ENCODE measurements at regions of chr4 and their contacts with region 1.

Region 1: GRCh38 chr4:25767877-25768725 is 94.7 kb downstream of the SEL1L3 start:
- DNase-seq: peak; percentile 33
- H3K4me3 ChIP-seq: no peak overlapping the region
- H3K27ac ChIP-seq: no peak overlapping the region
- H3K4me1 ChIP-seq: no peaks in the 10 kb centered on the region
- H3K27me3 ChIP-seq: no peaks in the 10 kb centered on the region
- CTCF ChIP-seq: peak; percentile 47

Region 2: DNA sequence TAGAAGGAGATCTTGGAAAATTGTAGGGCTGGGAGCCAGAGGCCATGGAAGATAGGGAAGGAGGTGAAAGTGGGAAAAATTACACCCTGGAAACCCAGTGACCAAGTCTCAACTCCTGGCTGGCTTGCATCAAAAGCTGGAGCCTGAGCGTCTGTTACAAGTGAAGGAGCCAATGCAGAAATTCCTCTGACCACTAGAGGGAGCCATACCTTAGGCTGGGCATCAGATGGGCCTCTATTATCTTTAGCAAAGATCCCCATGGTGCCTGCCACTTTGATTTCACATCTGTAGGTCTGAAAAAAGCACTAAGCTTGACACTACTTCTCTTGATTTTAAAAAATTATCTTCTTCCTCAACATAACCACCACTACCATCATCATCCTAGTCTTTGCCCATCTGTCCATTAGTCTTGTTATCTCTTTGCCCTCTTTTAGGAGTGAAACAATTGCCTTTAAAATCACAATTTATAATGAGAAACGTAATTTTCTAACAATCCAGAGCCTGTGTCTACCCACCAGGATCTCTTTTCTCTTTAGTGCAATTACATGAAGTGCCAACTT is 328.1 kb before region 1 on chr4:
- intact Hi-C with region 1: loop called (anchors 5 kb)
- DNase-seq: peak; percentile 74
- H3K4me3 ChIP-seq: no peak overlapping the region
- H3K27ac ChIP-seq: no peak overlapping the region
- H3K4me1 ChIP-seq: no peaks in the 10 kb centered on the region
- H3K27me3 ChIP-seq: no peaks in the 10 kb centered on the region
- CTCF ChIP-seq: peak; percentile 94

Region 3: DNA sequence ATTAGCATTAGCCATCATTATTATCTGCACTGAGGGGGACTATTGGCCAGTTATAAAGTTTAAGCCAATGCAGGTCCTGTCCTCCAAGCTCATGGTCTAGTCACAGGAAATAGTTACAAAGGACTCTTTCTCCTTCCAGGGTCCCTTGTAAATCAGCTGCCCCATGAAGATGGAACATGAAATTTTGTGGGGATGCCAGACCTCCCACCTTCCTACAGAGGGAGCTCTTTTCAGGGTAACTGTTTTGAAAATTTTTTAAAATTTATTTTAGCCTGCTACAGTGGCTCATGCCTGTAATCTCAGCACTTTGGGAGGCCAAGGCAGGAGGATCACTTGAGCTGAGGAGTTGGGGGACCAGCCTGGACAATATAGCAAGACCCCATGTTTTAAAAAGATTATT is 236.8 kb before region 1 on chr4:
- intact Hi-C with region 1: loop called (anchors 10 kb)
- DNase-seq: no peak
- H3K4me3 ChIP-seq: no peak overlapping the region
- H3K27ac ChIP-seq: no peak overlapping the region
- H3K4me1 ChIP-seq: no peaks in the 10 kb centered on the region
- H3K27me3 ChIP-seq: no peaks in the 10 kb centered on the region
- CTCF ChIP-seq: no peak

Measured in colonic mucosa (tissue), 4 donors.